Activated CD8-positive, alpha-beta T cell treated with anti-CD3 and anti-CD28 coated beads, Interleukin-2, amount 10 ng/mL, durations not matched to agents 7 days and 5 days (primary cell): ENCODE measurements at regions of chr16 and their contacts with region 1.

Region 1: GRCh38 chr16:22077700-22078313 is 14.5 kb upstream of the VWA3A start:
- DNase-seq: peak; percentile 82
- ATAC-seq: peak; percentile 64
- H3K4me3 Mint-ChIP-seq: no peak overlapping the region
- H3K27ac Mint-ChIP-seq: no peak overlapping the region
- H3K4me1 Mint-ChIP-seq: no peaks in the 10 kb centered on the region
- H3K27me3 Mint-ChIP-seq: no peaks in the 10 kb centered on the region

Region 2: DNA sequence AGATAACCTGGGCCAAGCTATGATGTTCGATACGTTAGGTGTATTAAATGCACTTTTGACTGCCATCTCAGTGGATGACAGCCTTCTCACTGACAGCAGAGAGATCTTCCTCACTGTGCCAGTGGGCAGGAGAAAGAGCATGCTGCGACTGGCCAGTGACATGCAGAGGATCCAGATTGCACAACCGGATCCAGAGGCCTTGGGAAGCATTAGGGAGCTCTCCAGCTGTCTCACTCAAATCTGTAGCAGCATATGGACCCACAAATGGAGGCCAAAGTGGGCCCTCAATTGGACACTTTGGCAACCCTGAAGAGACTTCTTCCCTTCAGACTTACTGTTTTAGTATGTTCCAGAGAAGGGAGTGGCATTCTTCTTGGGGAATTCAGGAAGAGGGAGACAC is 97.8 kb before region 1 on chr16:
- CTCF ChIA-PET with region 1: interaction called, 11 read pairs
- POLR2A ChIA-PET with region 1: no interaction called
- DNase-seq: no peak
- ATAC-seq: no peak
- H3K4me3 Mint-ChIP-seq: no peak overlapping the region
- H3K27ac Mint-ChIP-seq: no peak overlapping the region
- H3K4me1 Mint-ChIP-seq: no peaks in the 10 kb centered on the region
- H3K27me3 Mint-ChIP-seq: no peaks in the 10 kb centered on the region

Region 3: DNA sequence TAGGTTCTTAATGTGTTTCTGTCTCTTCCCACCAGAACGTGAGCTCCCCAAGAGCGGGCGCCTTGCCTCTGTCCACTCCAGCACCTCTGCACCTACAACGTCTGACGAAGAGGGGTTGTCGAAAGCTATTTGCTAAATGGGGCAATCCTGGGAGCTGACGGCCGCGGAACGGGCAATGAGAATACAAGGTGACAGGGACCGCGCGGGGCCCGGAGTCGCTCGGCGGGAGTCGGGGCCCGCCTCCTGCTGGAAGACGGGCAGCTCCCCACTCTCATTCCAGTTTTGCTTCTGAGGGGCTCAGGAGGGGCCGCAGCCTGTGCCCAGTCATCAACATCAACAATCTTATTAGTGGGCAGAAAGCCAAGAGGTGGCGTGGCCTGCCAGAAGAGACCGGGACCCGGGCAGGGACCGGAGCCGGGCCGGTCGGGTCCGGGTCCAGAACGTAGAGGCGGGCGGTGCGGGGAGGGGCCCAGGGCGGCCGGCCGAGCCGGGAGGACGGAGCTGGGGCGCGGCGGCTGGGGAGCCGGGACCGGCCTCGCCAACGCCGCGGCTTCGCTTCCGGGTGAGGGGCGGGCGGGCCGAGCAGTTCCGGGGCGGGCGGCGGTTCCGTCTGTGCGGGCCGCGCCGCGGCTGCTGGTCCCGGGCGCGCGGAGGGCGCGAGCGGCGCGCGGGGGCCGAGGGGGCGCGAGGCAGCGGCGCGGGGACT is 70.1 kb before region 1 on chr16 and contains the start of gene MOSMO:
- CTCF ChIA-PET with region 1: interaction called, 246 read pairs
- POLR2A ChIA-PET with region 1: interaction called, 6 read pairs
- DNase-seq: peak; percentile 65
- ATAC-seq: peak; percentile 94
- H3K4me3 Mint-ChIP-seq: peak within 1 kb of the TSS; percentile 82
- H3K27ac Mint-ChIP-seq: peak within 1 kb of the TSS; percentile 82
- H3K4me1 Mint-ChIP-seq: peaks cover 28% of the 10 kb centered on the region
- H3K27me3 Mint-ChIP-seq: peaks cover 2% of the 10 kb centered on the region
- total RNA-seq, gene MOSMO: 11.4 to 11.9 TPM

Region 4: DNA sequence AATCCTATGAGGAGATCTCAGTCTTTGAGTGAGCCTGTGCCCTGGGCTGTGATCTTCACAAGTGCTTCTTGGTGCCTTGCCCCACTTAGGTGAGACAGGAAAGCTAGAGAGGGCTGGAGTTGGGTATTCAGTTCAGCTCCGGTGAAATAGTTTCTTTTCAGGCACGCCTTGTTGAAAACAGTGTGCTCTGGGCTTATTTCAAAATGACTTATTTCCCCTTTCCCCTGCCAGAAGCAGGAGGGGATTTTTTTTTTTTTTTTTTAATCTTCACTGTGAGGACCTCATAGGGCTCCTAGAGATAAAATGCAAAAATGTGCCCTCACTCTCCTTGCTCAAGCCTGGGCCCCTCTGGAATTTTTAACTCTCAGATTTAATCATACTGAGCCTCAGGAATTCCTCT is 42.7 kb before region 1 on chr16:
- CTCF ChIA-PET with region 1: interaction called, 17 read pairs
- POLR2A ChIA-PET with region 1: no interaction called
- DNase-seq: no peak
- ATAC-seq: no peak
- H3K4me3 Mint-ChIP-seq: no peak overlapping the region
- H3K27ac Mint-ChIP-seq: no peak overlapping the region
- H3K4me1 Mint-ChIP-seq: peaks cover 17% of the 10 kb centered on the region
- H3K27me3 Mint-ChIP-seq: no peaks in the 10 kb centered on the region

Region 5: DNA sequence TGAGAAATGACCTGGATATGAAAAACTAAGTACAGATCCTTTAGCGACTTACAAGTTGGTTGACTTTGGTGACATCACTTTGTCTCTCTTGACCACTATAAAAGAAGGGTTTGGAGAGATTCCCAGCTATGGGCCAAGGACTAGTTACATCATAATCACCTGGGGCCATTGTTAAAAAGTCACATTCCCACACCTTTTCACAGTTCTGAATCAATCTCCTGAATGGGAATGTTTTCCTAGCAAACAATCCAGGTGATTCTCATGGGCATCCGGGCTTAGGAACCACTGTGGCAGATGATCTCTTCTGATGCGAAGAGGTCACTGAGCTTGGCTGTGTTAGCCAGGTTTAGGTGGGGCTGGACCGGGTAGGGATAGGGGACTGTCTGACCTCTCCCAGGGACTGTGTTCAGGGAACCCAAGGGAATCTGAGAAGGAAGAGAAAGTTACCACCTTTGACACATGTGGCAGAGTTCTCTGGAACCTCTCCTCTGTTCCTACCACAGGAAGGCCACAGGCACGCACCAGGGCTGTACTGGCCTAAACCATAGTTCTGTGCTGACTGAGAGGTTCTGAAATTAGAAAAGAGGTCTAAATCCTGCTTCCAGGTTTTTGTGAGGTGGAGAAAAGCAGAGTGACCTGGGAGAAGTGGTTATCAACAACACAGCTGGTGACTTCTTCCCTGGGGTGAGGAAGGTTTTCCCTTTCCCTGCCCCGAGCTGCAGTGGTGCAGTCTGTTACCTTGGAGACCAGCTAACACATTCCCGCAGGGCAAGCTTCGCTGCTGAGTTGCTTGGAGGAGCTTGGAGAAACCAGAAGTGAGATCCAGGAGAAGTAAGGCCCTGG is 14.2 kb after region 1 on chr16 and contains the start of gene VWA3A:
- CTCF ChIA-PET with region 1: interaction called, 67 read pairs
- POLR2A ChIA-PET with region 1: no interaction called
- DNase-seq: no peak
- ATAC-seq: no peak
- H3K4me3 Mint-ChIP-seq: no peak within 1 kb of the TSS
- H3K27ac Mint-ChIP-seq: no peak within 1 kb of the TSS
- H3K4me1 Mint-ChIP-seq: no peaks in the 10 kb centered on the region
- H3K27me3 Mint-ChIP-seq: peaks cover 8% of the 10 kb centered on the region
- total RNA-seq, gene VWA3A: 0.18 TPM in 1 of 2 experiments, not detected in the other

Region 6: DNA sequence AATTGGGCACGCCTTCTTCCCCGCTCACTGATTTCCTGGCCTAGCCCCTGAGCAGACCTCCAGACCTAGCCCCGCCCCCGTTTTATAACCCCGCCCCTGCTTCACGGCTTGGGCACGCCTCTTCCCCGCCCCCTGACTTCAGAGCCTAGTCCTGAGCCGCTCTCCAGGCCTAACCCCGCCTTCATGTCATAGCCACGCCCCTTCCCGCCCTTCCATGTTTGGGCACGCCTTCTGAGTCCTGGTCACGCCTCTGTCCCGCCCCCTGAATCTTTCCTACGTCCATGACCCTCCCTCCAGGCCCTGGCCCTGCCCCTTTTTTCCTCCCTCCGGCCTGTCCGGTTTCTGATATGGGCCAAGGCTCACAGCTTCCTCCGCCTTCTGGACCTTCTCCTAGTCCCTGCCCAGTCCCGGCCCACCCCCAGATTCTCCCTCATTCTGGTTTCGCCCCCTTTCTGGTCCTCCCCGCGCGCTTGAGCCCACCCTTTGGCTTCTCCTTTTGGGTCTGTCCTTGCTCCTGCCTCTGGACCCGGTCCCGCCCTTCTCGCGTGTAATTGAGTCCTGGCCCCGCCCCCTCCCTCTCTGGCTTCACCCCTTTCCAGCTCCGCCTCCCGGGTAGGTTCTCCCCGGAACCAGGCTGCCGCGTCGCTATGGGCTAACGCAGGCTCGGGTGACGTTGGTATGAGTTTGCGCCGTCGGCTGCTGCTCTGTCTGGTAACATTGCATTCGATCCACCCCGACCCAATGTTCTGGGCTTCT is 113.1 kb after region 1 on chr16:
- CTCF ChIA-PET with region 1: interaction called, 78 read pairs
- POLR2A ChIA-PET with region 1: interaction called, 13 read pairs
- DNase-seq: peak; percentile 100
- ATAC-seq: peak; percentile 63
- H3K4me3 Mint-ChIP-seq: peak overlapping the region; percentile 91
- H3K27ac Mint-ChIP-seq: peak overlapping the region; percentile 99
- H3K4me1 Mint-ChIP-seq: peaks cover 59% of the 10 kb centered on the region
- H3K27me3 Mint-ChIP-seq: no peaks in the 10 kb centered on the region